ENCODE measurements at regions of chr17 and their contacts with region 1.

Region 1: DNA sequence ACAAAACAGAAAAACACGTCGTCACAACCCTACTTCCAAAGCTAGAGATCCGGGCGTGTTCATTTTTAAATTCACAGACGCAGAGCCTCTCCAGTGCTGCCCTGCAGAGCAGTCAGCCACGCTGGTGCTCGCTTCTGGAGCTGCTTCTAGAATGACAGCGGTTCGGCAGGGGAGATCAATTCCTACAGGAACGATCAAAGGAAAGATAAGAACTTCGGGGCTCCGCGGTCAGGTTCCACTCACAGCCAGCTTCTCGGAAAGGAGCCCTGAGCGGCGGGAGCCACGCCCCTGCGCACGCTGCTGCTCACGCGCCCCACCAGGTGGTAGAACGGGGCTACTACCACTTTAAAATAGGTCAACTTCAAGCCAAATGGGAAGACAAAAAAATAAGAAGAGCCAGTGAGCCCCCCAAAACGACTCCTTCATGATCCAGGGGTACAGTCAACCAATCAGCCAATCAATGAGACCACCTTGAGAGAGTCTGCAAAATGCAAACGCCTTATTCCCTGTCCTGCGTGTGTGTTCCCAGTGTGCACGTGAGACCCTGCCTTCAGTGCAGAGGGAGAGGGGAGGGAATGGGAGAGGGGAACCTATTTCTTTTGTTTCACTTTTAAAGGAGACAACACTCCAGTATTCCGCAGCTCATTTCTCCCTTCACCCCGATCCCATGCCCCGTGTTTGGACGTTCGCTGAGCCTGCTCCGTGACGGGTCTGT is 209.7 kb downstream of the RBFOX3 start:
- H3K4me3 ChIP-seq: peak overlapping the region; percentile 6; the same call in 1 of the 2 replicates
- H3K27ac ChIP-seq: no peak overlapping the region
- H3K4me1 ChIP-seq: no peaks in the 10 kb centered on the region
- CTCF ChIP-seq: peak; percentile 72

Region 2: DNA sequence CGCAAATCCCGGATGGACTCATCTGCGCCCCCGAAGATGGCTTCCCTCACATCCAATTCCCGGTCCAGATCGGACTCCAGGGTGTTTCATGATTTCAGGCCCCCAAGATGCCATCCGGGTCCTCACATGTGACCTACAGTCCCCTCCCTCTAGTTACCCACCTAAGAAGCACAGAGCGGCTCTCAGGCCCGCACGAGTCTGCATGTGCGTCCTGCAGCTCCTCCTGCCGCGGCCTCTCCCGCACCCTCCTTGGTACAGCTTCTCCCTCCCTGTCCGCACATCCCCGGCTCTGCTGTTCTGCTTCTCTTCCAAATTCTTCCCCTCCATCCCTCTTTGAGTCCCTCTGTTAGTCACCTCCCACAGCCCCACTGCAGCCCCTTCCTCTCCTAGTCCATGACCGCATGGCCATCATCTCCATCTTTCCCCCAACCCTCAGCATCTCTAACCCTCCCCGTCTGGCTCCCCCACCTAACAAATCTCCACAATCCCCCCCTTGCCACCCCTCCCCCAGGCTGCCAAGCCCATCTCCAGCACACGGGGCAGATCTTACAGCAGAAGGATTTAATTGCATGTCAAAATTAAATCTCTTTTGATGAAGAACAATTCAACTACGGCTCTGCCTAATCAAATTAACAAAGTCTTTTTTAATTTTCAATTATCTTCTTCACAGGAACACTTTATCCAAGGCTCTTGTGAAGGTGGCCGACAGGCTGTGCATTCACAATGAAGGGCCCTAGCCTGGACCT is 21.3 kb before region 1 on chr17:
- CTCF ChIA-PET with region 1: no interaction called
- POLR2A ChIA-PET with region 1: no interaction called
- H3K4me3 ChIP-seq: no peak overlapping the region
- H3K27ac ChIP-seq: no peak overlapping the region
- H3K4me1 ChIP-seq: no peaks in the 10 kb centered on the region
- CTCF ChIP-seq: no peak

Region 3: GRCh38 chr17:79612468-79613194 is 211.5 kb after region 1 on chr17:
- CTCF ChIA-PET with region 1: interaction called, 23 read pairs
- POLR2A ChIA-PET with region 1: interaction called, 6 read pairs
- H3K4me3 ChIP-seq: no peak overlapping the region
- H3K27ac ChIP-seq: no peak overlapping the region
- H3K4me1 ChIP-seq: peaks cover 7% of the 10 kb centered on the region; the same call in 1 of the 2 replicates
- CTCF ChIP-seq: peak; percentile 75

Region 4: GRCh38 chr17:79707931-79708891 is 307.1 kb after region 1 on chr17:
- CTCF ChIA-PET with region 1: interaction called, 12 read pairs
- POLR2A ChIA-PET with region 1: no interaction called
- H3K4me3 ChIP-seq: no peak overlapping the region
- H3K27ac ChIP-seq: no peak overlapping the region
- H3K4me1 ChIP-seq: no peaks in the 10 kb centered on the region
- CTCF ChIP-seq: peak; percentile 67

Measured in HEK293 (cell line).